Prostate gland (tissue), 2 donors: ENCODE measurements at regions of chr3 and their contacts with region 1.

Region 1: GRCh38 chr3:14716591-14716990 is 41.6 kb downstream of the C3orf20 start:
- DNase-seq: no peak
- H3K4me3 ChIP-seq: no peak overlapping the region
- H3K27ac ChIP-seq: no peak overlapping the region
- H3K4me1 ChIP-seq: no peaks in the 10 kb centered on the region
- H3K27me3 ChIP-seq: no peaks in the 10 kb centered on the region
- CTCF ChIP-seq: no peak
- POLR2A ChIP-seq: no peak

Region 2: GRCh38 chr3:14685179-14685578 is 31.4 kb before region 1 on chr3:
- intact Hi-C with region 1: loop called (anchors 2 kb)
- DNase-seq: no peak
- H3K4me3 ChIP-seq: no peak overlapping the region
- H3K27ac ChIP-seq: no peak overlapping the region
- H3K4me1 ChIP-seq: no peaks in the 10 kb centered on the region
- H3K27me3 ChIP-seq: no peaks in the 10 kb centered on the region
- CTCF ChIP-seq: no peak
- POLR2A ChIP-seq: no peak